Activated naive CD4-positive, alpha-beta T cell treated with anti-CD3 and anti-CD28 coated beads for 36 hours (primary cell): ENCODE measurements at regions of chr2 and their contacts with region 1.

Region 1: GRCh38 chr2:158191076-158191895 is 89.6 kb downstream of the UPP2 start:
- DNase-seq: peak; percentile 66
- H3K4me3 Mint-ChIP-seq: no peak overlapping the region
- H3K27ac Mint-ChIP-seq: peak overlapping the region; percentile 32
- H3K4me1 Mint-ChIP-seq: peaks cover 25% of the 10 kb centered on the region
- H3K27me3 Mint-ChIP-seq: peaks cover 29% of the 10 kb centered on the region

Region 2: DNA sequence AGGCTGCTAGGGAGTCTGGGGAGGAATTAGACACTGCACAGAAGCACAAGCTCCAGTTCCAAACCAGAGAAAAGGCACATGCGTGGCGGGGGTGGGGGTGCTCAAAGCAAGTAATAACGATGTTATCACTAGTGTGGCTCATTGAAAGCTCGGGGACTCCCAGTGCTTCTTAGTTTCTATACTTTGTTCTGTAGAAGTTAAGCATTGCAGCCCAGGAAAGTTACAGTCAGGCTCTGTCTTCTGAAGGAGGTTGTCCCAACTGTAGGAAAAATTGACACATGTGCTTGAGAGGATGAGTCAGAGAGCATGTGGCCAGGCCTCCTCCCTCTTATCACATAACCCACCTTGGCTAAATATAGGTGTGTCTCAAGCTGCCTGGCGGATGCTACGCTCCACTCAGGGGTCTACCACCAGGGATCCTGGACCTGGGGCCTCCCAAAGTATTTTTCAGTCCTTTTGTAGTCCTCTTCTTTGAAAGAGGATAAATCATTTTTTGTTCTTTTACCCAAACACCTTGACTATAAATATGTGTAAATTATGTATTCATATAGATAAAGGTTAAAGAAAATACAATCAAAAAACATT is 930.0 kb before region 1 on chr2:
- CTCF ChIA-PET with region 1: no interaction called
- intact Hi-C with region 1: loop called (anchors 10 kb)
- DNase-seq: peak; percentile 83
- H3K4me3 Mint-ChIP-seq: no peak overlapping the region
- H3K27ac Mint-ChIP-seq: peak overlapping the region; percentile 2
- H3K4me1 Mint-ChIP-seq: peaks cover 25% of the 10 kb centered on the region
- H3K27me3 Mint-ChIP-seq: peaks cover 11% of the 10 kb centered on the region

Region 3: GRCh38 chr2:158024288-158024898 is 166.9 kb before region 1 on chr2:
- CTCF ChIA-PET with region 1: no interaction called
- intact Hi-C with region 1: loop called (anchors 5 kb)
- DNase-seq: peak; percentile 76
- H3K4me3 Mint-ChIP-seq: no peak overlapping the region
- H3K27ac Mint-ChIP-seq: no peak overlapping the region
- H3K4me1 Mint-ChIP-seq: peaks cover 7% of the 10 kb centered on the region
- H3K27me3 Mint-ChIP-seq: no peaks in the 10 kb centered on the region

Region 4: GRCh38 chr2:158391876-158392275 is 200.6 kb after region 1 on chr2:
- CTCF ChIA-PET with region 1: no interaction called
- intact Hi-C with region 1: loop called (anchors 2 kb)
- DNase-seq: peak; percentile 5
- H3K4me3 Mint-ChIP-seq: no peak overlapping the region
- H3K27ac Mint-ChIP-seq: no peak overlapping the region
- H3K4me1 Mint-ChIP-seq: peaks cover 7% of the 10 kb centered on the region
- H3K27me3 Mint-ChIP-seq: peaks cover 13% of the 10 kb centered on the region

Region 5: DNA sequence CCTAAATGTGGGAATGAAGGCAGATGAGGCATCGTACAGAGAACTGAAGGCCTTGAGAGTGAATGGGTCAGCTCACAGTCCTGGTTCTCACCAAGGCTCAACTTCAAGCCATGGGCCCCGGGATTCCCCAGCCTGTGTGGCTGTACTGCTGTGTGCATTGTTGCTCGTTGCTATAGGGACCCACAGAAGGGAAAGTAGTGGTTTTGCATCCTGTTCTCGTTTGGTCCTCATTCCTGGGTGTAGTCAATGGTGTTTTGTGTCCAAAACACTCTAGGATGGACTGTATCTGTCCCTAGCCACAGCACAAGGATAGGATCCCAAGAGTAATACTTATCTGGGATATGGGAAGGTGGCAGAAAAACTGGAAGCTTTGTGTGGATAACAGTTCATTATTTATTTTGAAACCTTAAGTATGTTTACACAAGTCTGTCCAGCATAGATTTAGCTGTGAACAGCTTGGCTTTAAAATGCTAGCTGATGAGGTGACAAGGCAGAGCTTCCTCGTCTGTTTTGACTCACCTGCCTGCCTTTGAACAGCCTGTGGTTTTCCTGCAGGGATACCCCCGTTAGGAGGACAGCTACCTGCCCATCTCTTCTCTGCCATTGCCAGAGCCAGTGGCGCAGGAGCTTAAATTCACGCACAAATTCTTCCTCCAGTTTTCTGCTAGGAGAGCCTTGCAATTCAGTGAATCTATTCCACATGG is 1010.2 kb after region 1 on chr2:
- CTCF ChIA-PET with region 1: no interaction called
- intact Hi-C with region 1: loop called (anchors 5 kb)
- DNase-seq: peak; percentile 44
- H3K4me3 Mint-ChIP-seq: no peak overlapping the region
- H3K27ac Mint-ChIP-seq: no peak overlapping the region
- H3K4me1 Mint-ChIP-seq: peaks cover 15% of the 10 kb centered on the region
- H3K27me3 Mint-ChIP-seq: no peaks in the 10 kb centered on the region